ENCODE measurements at regions of chr11 and their contacts with region 1.

Region 1: GRCh38 chr11:67265633-67266423 is 445 bp upstream of the GRK2 start:
- DNase-seq: peak; percentile 79
- ATAC-seq: peak; percentile 46
- H3K4me3 Mint-ChIP-seq: peak overlapping the region; percentile 77
- H3K27ac Mint-ChIP-seq: peak overlapping the region; percentile 73
- H3K4me1 Mint-ChIP-seq: peaks cover 71% of the 10 kb centered on the region
- H3K27me3 Mint-ChIP-seq: no peaks in the 10 kb centered on the region

Region 2: DNA sequence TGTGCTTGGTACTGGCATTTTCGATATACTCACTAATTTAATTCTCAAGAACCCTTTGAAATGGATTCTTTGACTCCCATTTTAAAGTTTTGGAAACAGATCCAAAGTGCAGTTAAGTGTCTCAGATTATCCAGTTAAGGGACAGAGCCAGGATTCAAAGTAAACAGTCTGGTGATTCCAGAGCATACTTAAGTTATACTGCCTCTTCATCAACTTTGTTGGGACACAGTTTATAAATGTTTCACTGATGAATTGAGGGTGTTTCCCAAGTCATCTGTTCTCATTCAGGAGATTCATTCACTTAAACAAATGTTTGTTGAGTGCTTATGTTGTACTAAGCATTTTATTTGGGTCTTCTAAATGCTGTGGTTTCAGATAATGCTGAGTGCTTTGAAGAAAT is 129.7 kb before region 1 on chr11:
- CTCF ChIA-PET with region 1: no interaction called
- POLR2A ChIA-PET with region 1: no interaction called
- DNase-seq: no peak
- ATAC-seq: no peak
- H3K4me3 Mint-ChIP-seq: no peak overlapping the region
- H3K27ac Mint-ChIP-seq: no peak overlapping the region
- H3K4me1 Mint-ChIP-seq: no peaks in the 10 kb centered on the region
- H3K27me3 Mint-ChIP-seq: no peaks in the 10 kb centered on the region

Region 3: DNA sequence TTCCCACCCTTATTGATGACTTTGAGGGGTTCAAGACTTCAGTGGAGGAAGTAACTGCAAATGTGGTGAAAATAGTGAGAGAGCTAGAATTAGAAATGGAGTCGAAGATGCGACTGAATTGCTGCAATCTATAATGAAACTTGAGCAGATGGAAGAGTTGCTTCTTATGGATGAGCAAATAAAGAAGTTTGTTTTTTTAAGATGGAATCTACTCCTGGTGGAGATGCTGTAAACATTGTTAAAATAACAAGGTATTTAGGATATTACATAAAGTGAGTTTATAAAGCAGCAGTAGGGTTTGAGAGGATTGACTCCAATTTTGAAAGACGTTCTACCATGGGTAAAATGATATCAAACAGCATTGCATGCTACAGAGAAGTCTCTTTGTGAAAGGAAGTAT is 63.8 kb before region 1 on chr11:
- CTCF ChIA-PET with region 1: no interaction called
- POLR2A ChIA-PET with region 1: no interaction called
- DNase-seq: no peak
- ATAC-seq: no peak
- H3K4me3 Mint-ChIP-seq: no peak overlapping the region
- H3K27ac Mint-ChIP-seq: no peak overlapping the region
- H3K4me1 Mint-ChIP-seq: no peaks in the 10 kb centered on the region
- H3K27me3 Mint-ChIP-seq: no peaks in the 10 kb centered on the region

Region 4: DNA sequence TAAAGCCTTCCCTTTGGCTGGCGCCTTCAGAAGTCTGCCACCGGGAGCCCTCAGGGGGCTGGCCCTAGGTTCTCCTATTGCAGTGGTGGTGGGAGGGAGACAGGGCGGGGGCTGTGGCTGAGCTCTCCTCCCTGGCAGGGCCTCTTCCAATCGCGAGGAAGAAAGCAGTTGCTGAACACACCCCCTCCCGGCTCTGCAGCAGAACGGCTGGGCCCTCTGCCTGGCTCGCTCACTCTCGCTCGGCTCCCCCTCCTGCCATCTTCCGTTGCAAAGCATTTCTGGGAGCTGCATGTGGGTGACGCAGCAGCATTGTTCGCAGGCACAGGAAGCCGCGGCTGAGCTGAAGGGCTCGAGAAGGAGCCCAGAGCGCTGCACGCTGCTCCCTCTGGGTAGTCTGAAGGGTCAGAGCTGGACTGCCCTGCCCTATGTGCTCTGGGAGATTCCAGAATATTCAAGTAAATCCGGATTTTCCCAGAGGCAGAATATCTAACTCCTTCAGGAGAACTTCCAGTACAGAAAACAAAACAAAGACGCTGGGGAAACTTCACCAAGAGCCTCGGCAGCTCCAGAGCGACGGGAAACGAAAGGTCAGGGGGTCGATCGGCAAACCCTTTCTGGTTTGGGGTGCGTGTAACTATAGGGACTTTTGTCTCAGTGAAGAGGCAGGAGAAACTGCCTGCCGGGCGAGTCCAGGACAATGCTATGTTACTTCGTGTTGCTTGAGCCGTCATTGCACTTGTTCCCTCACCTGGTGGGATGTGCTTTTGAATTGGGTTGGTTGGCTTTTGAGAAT is 25.8 kb before region 1 on chr11:
- CTCF ChIA-PET with region 1: interaction called, 7 read pairs
- POLR2A ChIA-PET with region 1: interaction called, 27 read pairs
- DNase-seq: peak; percentile 98
- ATAC-seq: peak; percentile 94
- H3K4me3 Mint-ChIP-seq: peak overlapping the region; percentile 100
- H3K27ac Mint-ChIP-seq: peak overlapping the region; percentile 98
- H3K4me1 Mint-ChIP-seq: peaks cover 45% of the 10 kb centered on the region
- H3K27me3 Mint-ChIP-seq: no peaks in the 10 kb centered on the region

Region 5: GRCh38 chr11:67277231-67277961 is 11.6 kb after region 1 on chr11:
- CTCF ChIA-PET with region 1: interaction called, 33 read pairs
- POLR2A ChIA-PET with region 1: interaction called, 50 read pairs
- DNase-seq: peak; percentile 95
- ATAC-seq: peak; percentile 91
- H3K4me3 Mint-ChIP-seq: peak overlapping the region; percentile 81
- H3K27ac Mint-ChIP-seq: peak overlapping the region; percentile 99
- H3K4me1 Mint-ChIP-seq: peaks cover 77% of the 10 kb centered on the region
- H3K27me3 Mint-ChIP-seq: no peaks in the 10 kb centered on the region

Region 6: DNA sequence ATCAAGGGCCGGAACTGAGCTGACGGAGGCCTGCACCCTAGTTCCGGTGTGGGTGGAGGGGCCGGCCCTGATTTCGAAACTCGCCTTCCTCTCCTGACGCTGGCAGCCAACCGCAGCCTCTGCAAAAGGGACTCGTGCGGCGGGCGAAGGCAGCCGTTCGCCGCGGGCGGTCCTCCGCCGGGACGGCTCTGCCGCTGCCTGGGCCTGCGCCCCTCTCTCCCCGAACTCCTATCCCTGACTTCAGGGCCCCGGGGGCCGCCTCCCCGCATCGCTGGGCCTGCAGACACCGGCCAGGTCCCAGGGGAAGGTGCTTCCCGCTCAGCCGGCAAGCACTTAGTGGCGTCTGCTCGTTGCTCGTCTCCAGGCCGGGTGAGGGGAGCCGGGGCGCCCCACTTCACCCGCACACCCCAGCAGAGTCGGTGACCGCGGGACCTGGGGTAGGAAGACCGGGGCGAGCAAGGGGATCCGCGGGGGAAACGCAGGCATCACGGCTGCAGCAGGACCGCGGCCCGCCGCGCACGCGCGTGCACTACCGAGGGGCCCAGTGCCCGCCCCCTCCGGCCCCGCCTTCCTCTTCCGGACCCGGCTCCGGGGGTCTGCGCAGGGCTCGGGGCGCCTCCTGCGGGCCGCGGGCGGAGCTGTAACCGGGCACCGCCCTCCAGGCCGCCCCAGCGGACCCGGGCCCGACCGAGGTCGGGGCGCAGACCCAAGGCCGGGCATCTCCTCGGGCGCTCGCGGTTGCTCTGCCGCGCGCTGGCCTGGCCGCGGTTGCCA is 22.8 kb after region 1 on chr11:
- CTCF ChIA-PET with region 1: interaction called, 60 read pairs
- POLR2A ChIA-PET with region 1: interaction called, 201 read pairs
- DNase-seq: peak; percentile 94
- ATAC-seq: peak; percentile 72
- H3K4me3 Mint-ChIP-seq: peak overlapping the region; percentile 75
- H3K27ac Mint-ChIP-seq: peak overlapping the region; percentile 97
- H3K4me1 Mint-ChIP-seq: peaks cover 79% of the 10 kb centered on the region
- H3K27me3 Mint-ChIP-seq: no peaks in the 10 kb centered on the region

Region 7: GRCh38 chr11:67353317-67354074 is 87.7 kb after region 1 on chr11 and contains the start of gene POLD4:
- CTCF ChIA-PET with region 1: interaction called, 55 read pairs
- POLR2A ChIA-PET with region 1: interaction called, 11 read pairs
- DNase-seq: peak; percentile 96
- ATAC-seq: peak; percentile 92
- H3K4me3 Mint-ChIP-seq: peak within 1 kb of the TSS; percentile 93
- H3K27ac Mint-ChIP-seq: peak within 1 kb of the TSS; percentile 99
- H3K4me1 Mint-ChIP-seq: peaks cover 42% of the 10 kb centered on the region
- H3K27me3 Mint-ChIP-seq: peaks cover 12% of the 10 kb centered on the region
- total RNA-seq, gene POLD4: 53.2 to 56.7 TPM

Measured in activated CD8-positive, alpha-beta T cell treated with anti-CD3 and anti-CD28 coated beads, Interleukin-2, amount 10 ng/mL, durations not matched to agents 7 days and 5 days (primary cell).